ENCODE measurements at regions of chr16 and their contacts with region 1.

Region 1: GRCh38 chr16:29862884-29863668 is at the start of gene CDIPT:
- DNase-seq: peak; percentile 97
- total RNA-seq, gene CDIPT: 73.8 TPM

Region 2: GRCh38 chr16:29738514-29738913 is 124.6 kb before region 1 on chr16:
- intact Hi-C with region 1: no loop called
- DNase-seq: no peak

Region 3: DNA sequence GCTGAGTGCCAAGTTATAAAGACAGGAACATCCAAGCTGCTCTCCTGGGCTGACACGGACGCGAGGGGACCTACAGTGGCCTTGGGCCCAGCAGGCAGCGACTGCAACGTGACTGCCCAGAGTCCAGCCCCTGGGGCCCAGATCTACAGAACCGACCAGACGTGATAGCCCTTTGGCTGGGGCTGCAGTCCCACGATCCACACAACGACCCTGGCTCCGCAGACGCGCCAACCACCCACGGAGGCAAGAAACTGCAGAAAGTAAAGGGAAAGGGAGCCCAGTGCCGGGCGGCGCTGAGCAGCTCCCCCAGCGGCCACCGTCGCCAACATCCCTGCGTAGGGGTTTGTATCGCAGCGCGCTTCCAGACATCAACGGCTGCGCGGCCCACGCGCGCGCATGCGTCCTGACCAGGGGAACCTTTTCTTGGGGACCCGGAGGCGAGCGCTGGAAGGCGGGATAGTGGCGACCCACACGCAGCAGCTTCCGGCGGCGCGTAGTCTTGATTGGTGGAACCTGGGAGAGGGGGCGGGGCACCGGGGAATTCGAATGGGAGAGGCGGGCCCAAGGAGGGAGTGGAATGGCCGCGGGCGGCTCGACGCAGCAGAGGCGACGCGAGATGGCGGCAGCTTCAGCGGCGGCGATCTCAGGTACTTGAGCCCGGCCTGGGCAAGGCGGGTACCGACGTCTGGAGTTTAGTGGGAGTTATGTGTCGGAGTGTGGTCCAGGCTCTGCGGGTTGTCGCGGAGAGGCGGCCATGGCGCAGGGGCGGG is 72.7 kb before region 1 on chr16 and contains the start of gene KIF22:
- intact Hi-C with region 1: loop called (anchors 1 kb)
- DNase-seq: peak; percentile 100
- total RNA-seq, gene KIF22: 21.8 TPM

Region 4: DNA sequence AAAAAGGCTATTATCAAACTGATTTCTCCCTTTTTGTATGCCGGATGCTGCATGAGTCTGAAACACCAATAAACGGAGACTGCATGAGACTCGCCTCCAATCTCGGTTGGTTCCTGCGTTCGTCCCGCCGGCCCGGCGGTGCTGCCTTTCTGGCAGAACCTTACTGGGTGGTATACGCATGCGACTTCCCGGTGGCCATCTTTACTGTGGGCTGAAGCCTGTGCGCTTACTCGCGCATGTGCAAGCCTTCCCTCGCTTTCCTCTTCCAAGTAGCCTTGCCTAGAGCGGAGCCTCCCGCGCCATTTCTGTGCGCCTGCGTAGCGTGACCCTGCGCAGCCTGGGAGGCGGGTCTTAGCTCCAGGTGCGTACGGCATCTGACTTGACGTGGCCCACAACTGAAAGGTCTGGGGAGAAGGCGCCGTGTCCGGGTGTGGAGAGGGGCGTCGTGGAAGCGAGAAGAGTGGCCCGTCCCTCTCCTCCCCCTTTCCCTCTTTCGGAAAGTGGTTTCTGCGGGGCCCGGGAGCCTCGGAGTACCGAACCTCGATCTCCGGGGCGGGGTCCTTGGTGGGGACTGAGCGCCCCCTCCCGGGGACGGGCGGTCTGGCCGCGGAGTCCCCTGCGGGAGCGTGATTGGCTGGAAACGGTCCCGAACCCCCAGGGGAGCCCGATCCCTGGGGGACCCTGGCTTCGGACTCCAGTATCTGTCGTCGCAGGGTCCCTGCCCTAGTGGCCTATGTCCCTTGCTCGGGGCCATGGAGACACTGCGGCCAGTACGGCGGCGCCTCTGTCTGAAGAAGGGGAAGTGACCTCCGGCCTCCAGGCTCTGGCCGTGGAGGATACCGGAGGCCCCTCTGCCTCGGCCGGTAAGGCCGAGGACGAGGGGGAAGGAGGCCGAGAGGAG is 47.0 kb before region 1 on chr16 and contains the start of gene PAGR1:
- intact Hi-C with region 1: loop called (anchors 5 kb)
- DNase-seq: peak; percentile 99
- total RNA-seq, gene PAGR1: 15.6 TPM

Region 5: GRCh38 chr16:29995911-29996772 is 133.1 kb after region 1 on chr16 and contains the start of gene INO80E:
- intact Hi-C with region 1: loop called (anchors 2 kb)
- DNase-seq: peak; percentile 100
- total RNA-seq, gene INO80E: 36.8 TPM